ENCODE measurements at regions of chr4 and their contacts with region 1.

Region 1: DNA sequence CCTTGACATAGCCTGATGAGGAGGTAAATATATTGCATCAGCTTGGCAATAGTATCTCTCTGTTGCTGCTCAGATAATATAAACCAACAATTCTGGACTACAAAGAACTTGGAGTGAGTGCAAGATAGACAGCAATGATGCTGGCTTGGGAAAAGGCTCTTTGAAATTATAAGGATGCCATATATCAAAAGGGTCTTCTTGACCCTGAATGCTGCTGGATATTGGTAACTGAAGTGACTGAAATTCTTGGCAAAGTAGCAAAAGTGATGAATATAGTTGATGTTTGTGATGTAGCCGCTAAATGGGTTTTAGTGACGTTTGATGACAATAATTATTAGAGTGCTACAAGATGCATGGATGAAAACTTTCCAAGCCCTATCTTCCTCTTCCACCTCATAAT is 1391.6 kb downstream of the ADGRL3 start:
- DNase-seq: no peak
- ATAC-seq: no peak
- H3K4me3 ChIP-seq: no peak overlapping the region
- H3K27ac ChIP-seq: no peak overlapping the region
- H3K4me1 ChIP-seq: no peaks in the 10 kb centered on the region
- H3K27me3 ChIP-seq: no peaks in the 10 kb centered on the region
- CTCF ChIP-seq: no peak

Region 2: DNA sequence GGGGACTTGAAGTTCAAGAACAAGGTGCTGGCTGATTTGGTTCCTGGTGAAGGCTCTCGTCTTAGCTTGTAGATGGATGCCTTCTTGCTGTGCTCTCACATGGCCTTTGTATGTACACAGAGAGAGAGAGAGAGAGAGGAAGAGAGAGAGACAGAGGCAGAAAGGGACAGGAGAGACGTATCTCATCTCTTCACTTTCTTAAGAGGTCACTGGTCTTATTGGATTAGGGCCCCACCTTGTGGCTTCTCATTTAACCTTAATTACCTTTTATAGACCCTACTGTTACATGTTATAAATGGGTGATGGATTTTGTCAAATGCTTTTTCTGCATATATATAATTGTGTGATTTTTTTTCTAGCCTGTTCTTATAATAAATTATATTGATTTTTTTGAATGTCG is 52.6 kb after region 1 on chr4:
- intact Hi-C with region 1: no loop called
- DNase-seq: no peak
- ATAC-seq: no peak
- H3K4me3 ChIP-seq: no peak overlapping the region
- H3K27ac ChIP-seq: no peak overlapping the region
- H3K4me1 ChIP-seq: no peaks in the 10 kb centered on the region
- H3K27me3 ChIP-seq: no peaks in the 10 kb centered on the region
- CTCF ChIP-seq: peak; percentile 11

Region 3: GRCh38 chr4:62709618-62710252 is 118.0 kb after region 1 on chr4:
- intact Hi-C with region 1: loop called (anchors 10 kb)
- DNase-seq: no peak
- ATAC-seq: peak in 2 of 4 donors; percentile 50 to 61
- H3K4me3 ChIP-seq: peak overlapping the region; percentile 24
- H3K27ac ChIP-seq: no peak overlapping the region
- H3K4me1 ChIP-seq: no peaks in the 10 kb centered on the region
- H3K27me3 ChIP-seq: no peaks in the 10 kb centered on the region
- CTCF ChIP-seq: peak; percentile 58

Measured in psoas muscle (tissue), 8 donors.